ENCODE measurements at regions of chr3 and their contacts with region 1.

Region 1: GRCh38 chr3:172750368-172751174 is at the start of gene ECT2:
- DNase-seq: peak; percentile 100
- H3K4me3 ChIP-seq: peak within 1 kb of the TSS; percentile 81
- H3K27ac ChIP-seq: peak within 1 kb of the TSS; percentile 98
- H3K4me1 ChIP-seq: peaks cover 74% of the 10 kb centered on the region
- H3K27me3 ChIP-seq: no peaks in the 10 kb centered on the region
- CTCF ChIP-seq: peak; percentile 91
- total RNA-seq, gene ECT2: 128 and 145 TPM in 2 replicates

Region 2: DNA sequence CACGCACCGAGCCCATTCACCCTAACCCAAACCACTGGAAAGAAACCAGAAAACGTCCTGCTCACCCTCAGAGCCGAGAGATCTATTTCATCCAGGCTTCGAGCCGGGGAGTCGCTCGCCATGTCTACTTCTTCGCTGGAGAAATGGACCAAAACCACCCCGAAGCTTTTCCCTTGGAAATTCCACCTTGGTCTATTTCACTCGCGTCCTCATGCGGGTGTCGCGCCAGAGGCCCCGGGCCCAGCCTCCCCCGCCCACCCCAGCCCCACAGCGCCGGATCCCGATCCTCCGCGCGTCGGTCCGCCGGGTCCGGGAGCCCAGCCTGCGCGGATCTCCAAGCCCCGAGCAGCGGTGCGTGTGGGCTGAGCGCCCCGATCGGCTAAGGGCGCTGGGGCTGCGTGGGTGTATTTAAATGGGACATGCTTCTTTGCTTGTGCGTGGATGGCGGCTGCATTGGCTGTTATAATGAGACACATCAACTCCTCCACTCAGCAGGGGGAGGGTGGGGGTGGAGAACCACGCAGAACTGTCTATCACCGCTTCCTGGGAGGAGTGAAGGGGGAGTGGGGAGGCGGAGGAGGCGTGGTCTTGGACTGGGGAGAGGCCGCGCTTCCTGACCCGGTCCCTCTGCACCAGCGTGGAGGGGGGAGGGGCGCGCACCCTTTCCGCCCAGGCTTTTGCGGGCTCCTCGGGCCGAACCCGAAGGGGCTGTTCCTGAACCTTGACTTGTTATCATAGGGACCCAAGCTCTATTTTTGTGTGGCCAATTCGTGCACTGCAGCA is 1290.4 kb before region 1 on chr3 and contains the start of gene TNIK:
- CTCF ChIA-PET with region 1: no interaction called
- POLR2A ChIA-PET with region 1: no interaction called
- intact Hi-C with region 1: loop called (anchors 5 kb)
- DNase-seq: peak; percentile 87 to 94
- H3K4me3 ChIP-seq: peak within 1 kb of the TSS; percentile 69
- H3K27ac ChIP-seq: peak within 1 kb of the TSS; percentile 50
- H3K4me1 ChIP-seq: peaks cover 46% of the 10 kb centered on the region
- H3K27me3 ChIP-seq: no peaks in the 10 kb centered on the region
- CTCF ChIP-seq: peak; percentile 38; the same call in 1 of the 2 replicates
- total RNA-seq, gene TNIK: 28.8 and 30.7 TPM in 2 replicates

Region 3: DNA sequence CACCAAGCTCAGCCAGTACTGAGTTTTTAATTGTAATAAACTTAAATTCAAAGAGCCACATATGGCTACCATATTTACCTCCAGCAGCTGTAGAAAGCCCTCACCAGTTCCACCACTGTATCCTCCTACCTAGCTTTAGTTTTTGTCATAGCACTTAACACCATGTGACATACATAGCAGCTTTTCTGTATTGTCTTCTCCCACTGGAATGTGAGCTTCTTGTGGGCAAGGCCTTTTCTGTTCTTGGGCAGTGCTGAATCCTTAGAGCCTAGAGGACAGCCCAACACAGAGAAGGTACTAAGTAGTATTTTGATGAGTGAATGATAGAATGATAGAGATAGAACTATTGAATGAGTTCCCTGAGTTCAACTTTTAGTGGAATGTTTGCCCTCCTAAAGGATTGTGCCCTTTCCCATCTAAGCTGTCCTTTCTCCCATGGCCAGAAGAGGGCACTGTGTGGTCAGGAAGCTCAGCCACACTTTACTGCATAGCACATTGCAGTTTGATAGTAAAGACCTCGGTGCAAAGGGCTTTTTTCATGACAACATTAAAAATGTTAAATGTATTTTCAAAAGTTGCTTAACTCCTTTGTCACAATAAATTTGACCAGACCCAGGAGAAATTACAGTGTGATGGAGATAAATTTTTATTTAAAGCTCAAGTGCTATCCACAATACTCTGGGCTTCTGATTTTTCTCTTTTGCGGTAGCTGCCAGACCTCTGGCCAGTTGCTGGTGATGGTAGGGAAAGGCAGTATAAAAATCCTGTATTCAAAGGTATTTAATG is 418.1 kb before region 1 on chr3:
- CTCF ChIA-PET with region 1: interaction called, 3 read pairs
- POLR2A ChIA-PET with region 1: interaction called, 24 read pairs
- intact Hi-C with region 1: loop called (anchors 5 kb)
- DNase-seq: peak; percentile 56 to 66
- H3K4me3 ChIP-seq: no peak overlapping the region
- H3K27ac ChIP-seq: no peak overlapping the region; the same call in 1 of the 2 replicates
- H3K4me1 ChIP-seq: 0 out of 2 replicates have a peak, but pooled peaks cover 7% of the 10 kb centered on the region
- H3K27me3 ChIP-seq: no peaks in the 10 kb centered on the region
- CTCF ChIP-seq: peak; percentile 98

Region 4: DNA sequence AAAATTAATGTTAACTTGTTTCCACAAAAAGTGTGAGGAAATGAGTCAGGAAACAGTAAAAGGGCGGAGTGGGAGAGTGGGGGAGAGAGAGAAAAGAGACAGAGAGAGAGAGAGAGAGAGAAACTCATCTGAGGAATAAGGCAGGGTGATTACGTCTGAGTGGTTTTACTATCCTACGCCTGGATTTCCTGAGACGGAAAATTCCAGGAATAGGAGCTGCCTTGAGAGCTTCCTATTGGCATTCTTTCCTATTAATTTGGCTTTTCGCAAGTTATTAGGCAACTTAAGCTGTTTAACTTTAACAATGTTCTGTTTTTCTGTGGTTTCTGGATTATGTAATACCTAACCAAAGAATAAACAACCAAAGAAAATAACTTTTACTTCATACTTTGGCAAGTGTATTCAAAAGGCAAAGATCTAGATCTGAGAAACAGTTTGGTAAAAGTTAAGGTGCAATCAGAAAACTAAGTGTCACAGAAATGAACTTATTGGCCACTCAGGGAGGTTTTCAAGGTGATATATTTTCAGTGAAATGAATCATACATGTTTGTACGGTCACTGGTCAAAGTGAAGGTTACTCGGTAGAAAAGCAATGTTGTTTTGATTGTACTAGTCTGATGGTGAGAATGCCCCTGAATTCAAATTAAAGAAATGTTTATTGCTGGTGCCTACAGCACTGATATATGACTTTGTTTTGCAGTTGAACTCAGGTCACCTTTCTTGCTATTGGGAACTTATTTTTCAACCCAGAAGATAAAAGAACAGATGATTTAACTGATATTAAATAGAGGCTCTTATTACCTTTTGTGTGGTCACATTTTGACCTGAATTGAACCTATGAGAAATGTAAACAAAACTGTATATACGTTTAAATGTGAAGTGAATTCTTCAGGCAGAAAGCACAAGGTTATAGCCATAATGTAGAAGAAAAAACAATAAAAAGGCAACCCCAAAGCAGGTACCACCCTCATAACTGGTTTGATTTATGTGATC is 187.4 kb before region 1 on chr3:
- CTCF ChIA-PET with region 1: no interaction called
- POLR2A ChIA-PET with region 1: interaction called, 3 read pairs
- intact Hi-C with region 1: loop called (anchors 1 kb)
- DNase-seq: peak; percentile 28 to 97
- H3K4me3 ChIP-seq: peak overlapping the region; percentile 27; the same call in 1 of the 2 replicates
- H3K27ac ChIP-seq: peak overlapping the region; percentile 88
- H3K4me1 ChIP-seq: peaks cover 64% of the 10 kb centered on the region
- H3K27me3 ChIP-seq: no peaks in the 10 kb centered on the region
- CTCF ChIP-seq: no peak; the same call in 1 of the 2 replicates

Region 5: GRCh38 chr3:172622916-172623700 is 127.5 kb before region 1 on chr3:
- CTCF ChIA-PET with region 1: no interaction called
- POLR2A ChIA-PET with region 1: interaction called, 4 read pairs
- intact Hi-C with region 1: loop called (anchors 5 kb)
- DNase-seq: peak; percentile 46 to 87
- H3K4me3 ChIP-seq: peak overlapping the region; percentile 30; the same call in 1 of the 2 replicates
- H3K27ac ChIP-seq: peak overlapping the region; percentile 38; the same call in 1 of the 2 replicates
- H3K4me1 ChIP-seq: peaks cover 37% of the 10 kb centered on the region
- H3K27me3 ChIP-seq: no peaks in the 10 kb centered on the region
- CTCF ChIP-seq: peak; percentile 95

Region 6: DNA sequence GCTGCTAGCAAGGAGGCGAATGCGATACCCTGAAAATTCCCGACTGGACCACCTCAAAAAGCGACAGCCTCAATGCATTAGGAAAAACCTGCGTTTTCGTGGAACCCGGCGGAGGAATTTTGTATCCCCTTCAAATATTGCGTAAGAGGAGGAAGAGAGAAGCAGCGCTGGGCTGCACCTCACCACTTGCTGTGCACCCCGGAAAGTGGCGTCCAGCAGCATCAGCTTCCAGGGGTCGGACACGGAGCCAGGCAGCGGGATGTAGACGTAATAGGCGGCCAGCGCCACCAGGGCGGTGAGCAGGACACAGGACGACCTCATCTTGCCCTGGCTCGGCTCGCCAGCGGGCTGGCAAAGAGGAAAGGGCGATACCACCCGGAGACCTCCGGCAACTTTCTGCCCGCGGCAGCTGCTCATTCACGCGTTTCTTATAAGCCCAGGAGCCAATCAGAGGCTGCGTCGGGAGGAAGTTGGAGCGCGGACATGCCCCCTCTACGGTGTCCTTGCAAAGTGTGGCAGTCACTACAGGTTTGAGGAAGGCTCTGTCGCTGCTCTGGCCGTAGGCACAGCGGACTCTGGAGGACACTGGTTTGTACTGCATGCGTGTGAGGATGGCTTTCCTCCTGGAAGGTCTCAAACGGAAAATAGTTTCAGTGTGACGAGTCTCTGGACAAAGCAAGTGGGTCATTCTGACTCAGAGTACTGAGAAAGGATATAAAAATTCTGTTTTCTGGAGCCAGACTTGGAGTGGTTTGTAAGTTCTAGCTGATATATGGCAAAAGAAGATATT is 39.7 kb before region 1 on chr3 and contains the start of gene NCEH1:
- CTCF ChIA-PET with region 1: interaction called, 39 read pairs
- POLR2A ChIA-PET with region 1: interaction called, 16 read pairs
- intact Hi-C with region 1: loop called (anchors 1 kb)
- DNase-seq: peak; percentile 98 to 100
- H3K4me3 ChIP-seq: peak within 1 kb of the TSS; percentile 83
- H3K27ac ChIP-seq: peak within 1 kb of the TSS; percentile 98
- H3K4me1 ChIP-seq: peaks cover 62% of the 10 kb centered on the region
- H3K27me3 ChIP-seq: no peaks in the 10 kb centered on the region
- CTCF ChIP-seq: peak; percentile 89
- total RNA-seq, gene NCEH1: 39.6 and 43.5 TPM in 2 replicates

Region 7: GRCh38 chr3:172771672-172772071 is 21.1 kb after region 1 on chr3:
- CTCF ChIA-PET with region 1: interaction called, 3 read pairs
- POLR2A ChIA-PET with region 1: interaction called, 25 read pairs
- intact Hi-C with region 1: no loop called
- DNase-seq: no peak
- H3K4me3 ChIP-seq: no peak overlapping the region
- H3K27ac ChIP-seq: no peak overlapping the region
- H3K4me1 ChIP-seq: no peaks in the 10 kb centered on the region
- H3K27me3 ChIP-seq: no peaks in the 10 kb centered on the region
- CTCF ChIP-seq: no peak